Breast epithelium (tissue), 4 donors: ENCODE measurements at regions of chr17 and their contacts with region 1.

Region 1: GRCh38 chr17:48791128-48792032 is 25.6 kb downstream of the TTLL6 start:
- DNase-seq: peak; percentile 72 to 76
- H3K4me3 ChIP-seq: no peak overlapping the region
- H3K27ac ChIP-seq: no peak overlapping the region
- H3K4me1 ChIP-seq: no peaks in the 10 kb centered on the region
- H3K27me3 ChIP-seq: peaks cover 0 to 18% of the 10 kb centered on the region in 2 donors
- CTCF ChIP-seq: peak; percentile 42 to 76 (median 72)
- POLR2A ChIP-seq: no peak

Region 2: GRCh38 chr17:48322060-48322459 is 469.3 kb before region 1 on chr17:
- intact Hi-C with region 1: loop called (anchors 10 kb)
- DNase-seq: no peak
- H3K4me3 ChIP-seq: no peak overlapping the region
- H3K27ac ChIP-seq: no peak overlapping the region
- H3K4me1 ChIP-seq: no peaks in the 10 kb centered on the region
- H3K27me3 ChIP-seq: peaks cover 0 to 11% of the 10 kb centered on the region in 2 donors
- CTCF ChIP-seq: no peak
- POLR2A ChIP-seq: no peak

Region 3: DNA sequence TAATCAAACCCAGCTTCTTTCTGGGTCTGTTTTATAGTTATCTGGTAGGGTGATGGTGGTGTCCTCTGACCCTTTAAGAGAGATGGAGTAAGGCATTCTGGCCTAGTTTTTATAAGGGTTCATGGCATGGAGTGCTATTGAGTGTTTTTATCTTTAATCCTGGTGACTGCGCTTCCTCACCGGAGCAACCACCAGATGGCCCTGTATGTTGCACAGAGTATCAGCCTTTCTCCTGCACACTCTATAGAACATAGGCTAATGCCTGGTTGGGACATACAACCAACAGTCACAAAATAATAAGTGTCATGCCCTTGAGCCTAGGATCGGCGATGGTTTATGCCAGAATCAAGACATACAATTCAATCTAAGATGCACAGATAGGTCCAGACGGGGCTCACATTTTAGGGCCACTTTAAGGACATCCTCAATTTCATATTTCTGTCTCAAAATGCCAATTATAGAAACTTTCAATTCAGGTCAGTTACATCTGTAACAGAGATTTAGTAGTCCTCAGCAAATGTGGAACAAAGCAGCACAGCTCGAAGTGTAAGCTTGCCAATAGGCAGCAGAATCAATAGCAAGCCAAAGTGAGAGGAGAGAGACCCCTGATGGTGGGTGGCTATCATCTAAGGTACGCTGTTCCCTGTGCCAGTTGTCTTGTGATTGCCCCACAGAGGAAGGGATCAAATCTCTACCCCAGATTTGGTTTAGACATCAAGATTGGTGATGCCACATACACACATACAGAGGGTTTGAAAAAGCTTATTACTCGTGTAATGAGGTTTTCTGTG is 128.1 kb before region 1 on chr17:
- intact Hi-C with region 1: loop called (anchors 10 kb)
- DNase-seq: no peak
- H3K4me3 ChIP-seq: no peak overlapping the region
- H3K27ac ChIP-seq: no peak overlapping the region
- H3K4me1 ChIP-seq: no peaks in the 10 kb centered on the region
- H3K27me3 ChIP-seq: peaks cover 0 to 24% of the 10 kb centered on the region in 2 donors
- CTCF ChIP-seq: no peak
- POLR2A ChIP-seq: no peak

Region 4: DNA sequence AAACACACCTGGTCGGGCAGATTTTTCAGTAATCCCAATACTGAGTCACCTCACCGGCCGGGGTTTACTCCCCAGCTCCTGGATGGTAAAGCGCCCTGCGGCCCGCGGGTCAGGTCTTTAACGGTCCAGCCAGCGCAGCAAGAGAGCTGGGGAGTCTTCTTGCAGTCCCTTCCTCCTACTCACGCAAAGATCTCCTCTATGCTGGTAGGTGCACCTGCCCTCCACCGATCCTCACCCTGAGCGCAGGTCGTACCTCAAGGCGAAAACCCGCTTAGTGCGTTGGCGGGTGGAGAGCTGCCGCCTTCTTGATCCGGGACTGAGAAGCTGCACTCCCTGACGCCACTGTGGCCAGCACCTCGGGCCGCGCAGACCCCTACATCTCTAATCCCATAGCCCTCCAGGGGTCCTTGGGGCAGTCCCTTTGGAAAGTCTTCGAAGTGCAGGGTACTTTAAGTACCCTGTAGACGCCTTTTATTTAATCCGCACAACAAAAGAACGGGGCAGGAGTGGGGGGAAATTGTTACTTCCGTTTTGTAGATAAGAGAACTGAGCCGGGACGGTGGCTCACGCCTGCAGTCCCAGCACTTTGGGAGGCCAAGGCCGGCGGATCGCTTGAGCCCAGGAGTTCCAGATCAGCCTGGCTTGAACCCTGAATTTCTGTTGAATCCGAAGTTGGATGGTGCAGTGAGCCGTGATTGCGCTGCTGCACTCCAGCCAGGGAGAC is 52.4 kb before region 1 on chr17:
- intact Hi-C with region 1: loop called (anchors 10 kb)
- DNase-seq: no peak
- H3K4me3 ChIP-seq: no peak overlapping the region
- H3K27ac ChIP-seq: no peak overlapping the region
- H3K4me1 ChIP-seq: no peaks in the 10 kb centered on the region
- H3K27me3 ChIP-seq: peaks cover 7 to 100% of the 10 kb centered on the region in 2 donors
- CTCF ChIP-seq: no peak
- POLR2A ChIP-seq: no peak